BJ (cell line): ENCODE measurements at regions of chr1 and their contacts with region 1.

Region 1: GRCh38 chr1:201828820-201829774 is at the start of gene IPO9:
- DNase-seq: peak; percentile 51
- H3K4me3 ChIP-seq: peak within 1 kb of the TSS; percentile 99
- H3K27me3 ChIP-seq: no peaks in the 10 kb centered on the region
- CTCF ChIP-seq: peak; percentile 91
- polyA plus RNA-seq, gene IPO9: 48.2 and 49.5 TPM in 2 replicates

Region 2: GRCh38 chr1:201810466-201811216 is 18.5 kb before region 1 on chr1:
- CTCF ChIA-PET with region 1: no interaction called
- POLR2A ChIA-PET with region 1: no interaction called
- DNase-seq: no peak
- H3K4me3 ChIP-seq: no peak overlapping the region
- H3K27me3 ChIP-seq: no peaks in the 10 kb centered on the region
- CTCF ChIP-seq: no peak

Region 3: DNA sequence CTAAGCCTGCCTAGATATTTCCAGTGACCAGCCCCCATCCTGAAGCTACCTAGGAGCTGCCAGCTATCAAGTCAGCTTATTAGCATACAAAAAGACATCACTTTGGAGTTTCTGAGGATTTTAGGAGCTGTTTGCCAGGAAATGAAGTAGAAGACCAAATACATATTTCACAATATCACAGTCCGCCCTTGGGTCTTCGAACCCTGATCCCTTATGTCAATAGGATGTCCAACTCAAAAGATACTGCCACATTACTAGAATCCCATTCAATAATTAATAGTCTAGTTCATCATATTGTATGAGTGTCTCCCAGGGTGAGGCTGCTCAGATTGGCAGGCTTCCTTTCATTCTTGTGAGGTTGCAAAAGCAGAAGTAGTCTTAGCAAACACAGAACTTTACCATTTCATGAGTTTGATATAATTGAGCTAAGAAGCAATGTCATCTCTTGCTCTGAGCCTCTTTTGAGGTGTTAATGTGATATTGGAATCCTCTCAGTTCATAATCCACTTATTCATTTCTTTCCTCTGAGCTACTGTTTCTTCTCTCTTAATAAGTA is 13.5 kb after region 1 on chr1:
- CTCF ChIA-PET with region 1: interaction called, 26 read pairs
- POLR2A ChIA-PET with region 1: no interaction called
- DNase-seq: no peak
- H3K4me3 ChIP-seq: no peak overlapping the region
- H3K27me3 ChIP-seq: no peaks in the 10 kb centered on the region
- CTCF ChIP-seq: no peak

Region 4: DNA sequence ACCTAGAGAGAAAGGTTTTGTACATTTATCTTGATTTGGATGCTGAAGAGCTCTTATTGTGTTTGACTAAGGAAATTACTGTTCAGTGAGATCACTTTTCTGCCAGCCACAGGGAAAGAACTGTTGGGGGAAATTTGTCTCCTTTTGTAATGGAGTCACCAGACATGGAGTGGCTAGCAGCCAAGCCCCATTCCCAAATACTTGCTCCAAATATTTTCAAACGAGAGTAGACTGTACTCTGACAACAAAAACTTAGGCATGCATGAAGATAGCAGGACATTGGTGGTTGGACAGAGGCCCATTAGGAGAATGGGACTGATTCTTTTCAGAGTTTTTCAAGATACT is 20.9 kb after region 1 on chr1:
- CTCF ChIA-PET with region 1: interaction called, 15 read pairs
- POLR2A ChIA-PET with region 1: no interaction called
- DNase-seq: peak; percentile 87
- H3K4me3 ChIP-seq: no peak overlapping the region
- H3K27me3 ChIP-seq: no peaks in the 10 kb centered on the region
- CTCF ChIP-seq: no peak